ENCODE measurements at regions of chr14 and their contacts with region 1.

Region 1: DNA sequence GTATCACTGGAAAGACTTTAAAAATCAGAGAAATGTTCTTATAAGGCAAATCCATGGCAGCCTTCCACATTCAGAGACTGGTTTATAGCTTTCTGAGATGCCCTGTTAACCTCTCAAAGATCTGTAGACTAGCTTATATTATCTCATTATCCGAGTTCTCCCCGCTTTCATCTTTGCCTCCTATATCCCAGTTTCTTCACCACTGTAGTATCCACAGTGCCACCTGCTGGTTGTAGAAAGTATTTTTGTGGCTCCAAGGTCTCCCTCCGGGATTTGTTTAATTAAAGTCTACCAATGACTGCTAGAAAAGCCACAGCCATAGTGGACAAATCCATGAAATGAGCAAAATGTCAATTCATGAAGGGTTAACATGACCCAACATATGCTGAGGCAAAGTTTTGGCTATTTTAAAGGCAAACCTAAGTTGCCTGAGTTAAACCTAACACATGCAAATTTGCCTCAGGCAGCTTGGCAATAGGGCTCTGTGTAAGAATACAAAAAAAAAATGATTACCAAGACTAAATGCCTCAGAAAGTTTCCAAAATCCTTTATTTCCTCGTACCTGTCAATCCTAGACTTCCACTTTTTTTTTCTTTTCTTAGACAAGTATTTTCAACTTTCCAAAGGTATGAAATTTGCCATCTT is 218.8 kb upstream of the BMP4 start:
- DNase-seq: no peak
- H3K4me3 ChIP-seq: no peak overlapping the region
- H3K27ac ChIP-seq: no peak overlapping the region
- H3K4me1 ChIP-seq: peaks cover 5 to 24% (median 15%) of the 10 kb centered on the region in 4 donors
- H3K27me3 ChIP-seq: peaks cover 0 to 7% (median 0%) of the 10 kb centered on the region in 4 donors
- CTCF ChIP-seq: peak; percentile 82 to 89 (median 83)
- EP300 ChIP-seq: no peak
- POLR2A ChIP-seq: no peak

Region 2: DNA sequence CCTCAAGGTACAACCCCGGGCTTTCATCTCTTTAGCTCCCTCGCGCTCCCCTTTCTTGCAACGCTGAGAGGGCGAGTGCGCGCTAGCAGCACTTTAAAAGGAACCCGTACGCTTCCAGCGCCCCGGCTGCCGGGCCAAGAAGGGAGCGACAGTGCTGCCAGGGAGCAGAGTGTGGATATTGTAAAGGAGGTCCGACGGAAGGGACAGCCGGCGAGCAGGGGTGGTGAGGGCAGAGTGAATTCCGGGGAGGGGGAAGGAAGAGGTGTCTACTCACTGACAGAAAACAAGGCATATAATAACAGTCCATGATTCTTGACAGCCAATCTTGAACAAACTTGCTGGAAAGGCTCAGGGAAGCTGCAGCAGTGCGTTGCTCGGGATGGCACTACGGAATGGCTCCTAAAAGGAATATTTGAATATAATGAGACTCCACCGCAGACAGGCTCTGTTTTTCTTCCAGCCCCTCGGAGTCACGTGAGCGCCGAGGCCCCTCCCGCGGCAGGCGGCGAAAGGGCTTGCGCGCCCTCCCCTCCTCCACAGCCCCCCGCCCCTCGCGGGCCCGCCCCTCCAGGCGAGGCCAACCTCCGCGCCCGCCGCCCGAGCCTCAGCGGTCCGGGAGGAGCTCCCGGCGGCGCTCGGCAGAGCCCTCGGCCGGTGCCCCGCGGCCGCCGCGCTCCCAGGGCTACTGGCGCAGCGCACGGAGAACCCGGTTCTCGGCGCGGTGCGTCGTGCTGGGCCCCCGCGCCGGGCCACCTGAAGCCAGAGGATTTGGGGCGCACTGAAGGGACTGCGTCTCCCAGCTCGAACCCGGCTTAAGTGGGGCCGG is 222.2 kb before region 1 on chr14:
- intact Hi-C with region 1: loop called (anchors 10 kb)
- DNase-seq: no peak
- H3K4me3 ChIP-seq: peak overlapping the region; percentile 59 to 68 (median 66)
- H3K27ac ChIP-seq: peak overlapping the region; percentile 72 to 83 (median 78)
- H3K4me1 ChIP-seq: peaks cover 21 to 63% (median 57%) of the 10 kb centered on the region in 4 donors
- H3K27me3 ChIP-seq: peaks cover 0 to 90% (median 24%) of the 10 kb centered on the region in 4 donors
- CTCF ChIP-seq: no peak
- EP300 ChIP-seq: no peak
- POLR2A ChIP-seq: peak; percentile 74

Measured in esophagus muscularis mucosa (tissue), 4 donors.